Right lobe of liver (tissue), 6 donors: ENCODE measurements at regions of chr3 and their contacts with region 1.

Region 1: GRCh38 chr3:97901313-97902248 is 70.7 kb downstream of the RIOX2 start:
- DNase-seq: peak in 1 of 3 donors; percentile 44
- ATAC-seq: peak; percentile 90 to 94 (median 93)
- H3K4me3 ChIP-seq: no peak overlapping the region
- H3K27ac ChIP-seq: peak overlapping the region; percentile 13 to 62 (median 41)
- H3K4me1 ChIP-seq: peaks cover 0 to 18% (median 3%) of the 10 kb centered on the region in 4 donors
- H3K27me3 ChIP-seq: no peaks in the 10 kb centered on the region
- CTCF ChIP-seq: no peak
- POLR2A ChIP-seq: no peak

Region 2: GRCh38 chr3:97952280-97952679 is 50.7 kb after region 1 on chr3:
- intact Hi-C with region 1: loop called in 1 of 2 experiments (anchors 5 kb)
- DNase-seq: no peak
- ATAC-seq: peak in 3 of 4 donors; percentile 32 to 79 (median 55)
- H3K4me3 ChIP-seq: no peak overlapping the region
- H3K27ac ChIP-seq: no peak overlapping the region
- H3K4me1 ChIP-seq: no peaks in the 10 kb centered on the region
- H3K27me3 ChIP-seq: no peaks in the 10 kb centered on the region
- CTCF ChIP-seq: no peak
- POLR2A ChIP-seq: no peak

Region 3: DNA sequence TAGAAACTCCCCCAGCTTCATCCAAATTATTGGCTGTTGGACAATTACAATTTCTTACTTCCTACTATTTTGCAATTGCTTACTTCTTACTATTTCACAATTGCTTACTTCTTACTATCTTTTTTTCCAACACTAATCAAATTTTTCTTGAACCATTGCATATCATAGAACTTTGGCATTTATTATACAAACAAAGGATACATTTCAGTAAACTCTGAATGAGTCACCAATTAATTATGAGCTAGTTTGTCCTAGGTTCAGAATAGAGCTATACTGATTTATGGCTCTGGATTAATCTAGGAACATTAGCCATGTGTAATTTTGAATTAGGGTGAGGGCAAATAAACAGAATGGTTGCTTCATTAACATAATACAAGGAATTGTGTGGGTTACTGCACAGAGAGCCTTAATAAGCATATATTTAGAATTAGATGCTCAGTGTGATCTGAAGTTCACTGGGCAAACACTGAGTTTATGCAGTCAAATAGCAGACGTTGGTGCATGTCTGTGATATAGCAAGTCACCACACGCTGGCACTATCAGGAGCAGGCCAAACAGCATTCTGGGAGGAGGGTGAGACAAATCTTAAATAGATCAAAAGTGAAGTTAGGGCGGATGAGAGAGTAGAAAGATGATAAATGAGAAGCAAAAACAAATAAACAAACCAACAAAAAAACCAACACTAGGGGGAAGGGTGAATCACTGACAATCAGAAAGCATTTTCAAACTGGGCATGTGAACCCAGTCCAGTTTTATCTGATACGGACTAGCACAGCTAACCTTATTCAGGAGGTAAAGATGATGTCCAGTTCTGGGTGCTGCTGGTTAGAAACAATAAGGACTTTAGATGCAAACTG is 112.1 kb after region 1 on chr3:
- intact Hi-C with region 1: no loop called
- DNase-seq: no peak
- ATAC-seq: peak; percentile 43 to 70 (median 64)
- H3K4me3 ChIP-seq: no peak overlapping the region
- H3K27ac ChIP-seq: peak overlapping the region in 1 of 3 donors; percentile 36
- H3K4me1 ChIP-seq: peaks cover 0 to 37% (median 3%) of the 10 kb centered on the region in 4 donors
- H3K27me3 ChIP-seq: no peaks in the 10 kb centered on the region
- CTCF ChIP-seq: no peak
- POLR2A ChIP-seq: no peak